Motor neuron (in vitro differentiated cells): ENCODE measurements at regions of chr2 and their contacts with region 1.

Region 1: DNA sequence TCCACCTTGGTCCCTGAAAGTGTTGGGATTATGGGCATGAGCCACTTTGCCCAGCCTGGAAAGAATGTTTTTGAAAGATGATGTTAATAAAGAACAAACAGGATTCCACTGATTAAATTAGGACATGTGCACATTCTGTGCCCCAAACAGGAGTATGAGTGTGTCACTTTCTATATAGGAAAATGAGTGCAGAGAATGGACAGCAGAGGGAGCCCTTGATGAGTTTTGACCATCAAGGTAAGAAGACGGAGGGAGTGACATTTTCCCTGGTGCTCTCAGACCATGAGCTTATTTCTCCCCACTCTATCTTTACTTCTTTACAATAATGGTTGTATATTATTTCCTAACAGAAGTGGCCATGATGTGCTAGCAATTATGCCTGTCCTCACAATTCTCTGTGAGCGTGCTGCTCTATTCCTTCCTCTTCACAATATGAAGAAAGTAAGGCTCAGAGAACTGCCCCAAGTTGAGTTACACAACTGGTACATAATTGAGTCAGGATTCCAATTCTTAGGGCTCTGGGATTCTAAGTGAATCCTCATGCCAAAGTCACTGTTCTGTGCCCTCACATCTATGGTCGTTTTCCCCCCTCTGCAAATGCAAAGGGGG is 20.6 kb downstream of the RPL37A start:
- ATAC-seq: peak; percentile 61 to 92 (median 80)
- H3K4me3 ChIP-seq: no peak overlapping the region
- H3K27ac ChIP-seq: no peak overlapping the region
- H3K4me1 ChIP-seq: peaks cover 0 to 10% of the 10 kb centered on the region in 2 donors

Region 2: DNA sequence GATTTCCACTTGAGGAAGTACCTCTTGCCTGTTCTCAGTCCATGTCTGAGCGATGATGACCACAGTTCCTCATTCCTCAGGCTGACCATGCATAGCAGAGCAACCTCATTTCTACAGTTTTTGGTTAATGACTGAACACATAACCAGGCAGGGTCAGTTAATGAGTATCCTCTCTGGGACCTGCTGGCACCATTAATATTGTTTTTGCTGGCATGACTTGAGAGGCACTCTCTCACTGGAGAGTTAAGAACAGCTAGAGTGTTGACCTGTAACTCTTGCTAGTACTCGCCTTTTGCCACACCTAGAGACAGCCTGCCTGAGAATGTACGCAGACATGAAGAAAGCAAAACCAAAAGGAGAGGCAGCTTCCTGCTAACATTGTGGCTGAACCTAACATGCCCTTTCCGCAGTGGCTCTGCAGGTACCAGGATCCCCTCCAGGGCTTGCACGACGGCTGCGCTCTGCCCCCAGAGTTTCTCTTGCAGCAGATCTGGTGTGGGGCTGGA is 461.5 kb before region 1 on chr2:
- in situ Hi-C with region 1: no loop called
- ATAC-seq: peak in 1 of 8 experiments; percentile 67
- H3K4me3 ChIP-seq: no peak overlapping the region
- H3K27ac ChIP-seq: no peak overlapping the region
- H3K4me1 ChIP-seq: no peaks in the 10 kb centered on the region

Region 3: GRCh38 chr2:216666461-216667233 is 147.4 kb after region 1 on chr2:
- in situ Hi-C with region 1: loop called (anchors 5 to 25 kb)
- ATAC-seq: peak; percentile 53 to 86 (median 80)
- H3K4me3 ChIP-seq: no peak overlapping the region
- H3K27ac ChIP-seq: no peak overlapping the region
- H3K4me1 ChIP-seq: peaks cover 19 to 20% of the 10 kb centered on the region in 2 donors

Region 4: DNA sequence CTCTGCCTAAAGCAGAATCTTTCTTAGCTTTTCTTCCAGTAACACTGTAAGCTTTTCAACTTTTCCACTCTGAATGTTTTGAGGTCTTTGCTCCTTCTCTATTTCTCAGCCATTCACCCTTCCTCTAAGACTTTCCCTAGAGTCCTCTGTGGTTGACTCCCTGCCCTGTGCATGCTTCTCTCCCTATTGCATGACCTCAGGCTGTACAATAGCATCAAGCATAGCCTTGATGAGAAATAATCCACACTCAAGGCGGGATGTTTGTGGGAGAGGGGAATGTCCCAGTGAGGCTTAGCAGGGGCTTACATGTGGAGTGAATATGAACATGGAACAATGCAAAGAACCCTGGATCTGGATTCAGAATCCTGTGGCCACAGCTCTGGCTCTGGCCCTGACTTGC is 224.5 kb after region 1 on chr2:
- in situ Hi-C with region 1: no loop called
- ATAC-seq: peak in 1 of 8 experiments; percentile 41
- H3K4me3 ChIP-seq: no peak overlapping the region
- H3K27ac ChIP-seq: no peak overlapping the region
- H3K4me1 ChIP-seq: peaks cover 0 to 4% of the 10 kb centered on the region in 2 donors

Region 5: DNA sequence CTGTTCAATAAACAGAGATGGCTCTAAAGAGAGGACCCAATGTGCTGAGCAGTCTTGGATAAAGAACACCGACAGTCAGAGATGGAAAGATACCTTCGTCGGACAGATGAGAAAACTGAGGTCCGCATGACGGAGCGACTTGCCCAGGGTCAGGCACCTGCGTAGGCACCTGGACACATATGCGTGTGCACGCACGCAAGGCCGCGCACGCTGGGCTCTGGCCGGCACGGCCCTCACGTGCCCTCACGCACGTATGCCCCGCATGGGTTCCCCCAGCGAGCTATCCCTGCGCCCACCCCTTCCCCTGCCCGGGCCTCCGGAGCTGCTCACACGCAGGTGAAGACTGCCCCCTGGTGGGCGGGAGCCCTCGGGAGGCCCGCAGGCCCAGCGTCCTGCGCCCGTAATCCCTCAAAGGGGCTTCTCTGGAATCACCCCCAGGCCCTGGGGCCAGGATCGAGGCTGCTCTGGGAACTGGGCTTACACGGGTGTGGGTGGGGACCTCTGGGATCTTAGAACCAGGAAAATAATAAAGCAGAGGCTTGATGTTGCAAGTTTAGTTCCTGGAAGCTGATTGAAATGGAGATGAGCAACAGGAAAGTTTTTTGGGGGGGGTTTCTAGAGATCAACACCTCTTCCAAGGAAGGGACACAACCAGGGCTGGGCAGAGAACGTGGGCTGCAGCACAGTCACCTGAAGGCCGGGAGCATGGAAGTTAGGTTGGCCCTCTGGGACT is 1237.3 kb after region 1 on chr2:
- in situ Hi-C with region 1: loop called in 1 of 9 experiments (anchors 25 kb)
- ATAC-seq: peak; percentile 80 to 99 (median 88)
- H3K4me3 ChIP-seq: no peak overlapping the region
- H3K27ac ChIP-seq: no peak overlapping the region
- H3K4me1 ChIP-seq: no peaks in the 10 kb centered on the region